Heart left ventricle (tissue), 16 donors: ENCODE measurements at regions of chr1 and their contacts with region 1.

Region 1: DNA sequence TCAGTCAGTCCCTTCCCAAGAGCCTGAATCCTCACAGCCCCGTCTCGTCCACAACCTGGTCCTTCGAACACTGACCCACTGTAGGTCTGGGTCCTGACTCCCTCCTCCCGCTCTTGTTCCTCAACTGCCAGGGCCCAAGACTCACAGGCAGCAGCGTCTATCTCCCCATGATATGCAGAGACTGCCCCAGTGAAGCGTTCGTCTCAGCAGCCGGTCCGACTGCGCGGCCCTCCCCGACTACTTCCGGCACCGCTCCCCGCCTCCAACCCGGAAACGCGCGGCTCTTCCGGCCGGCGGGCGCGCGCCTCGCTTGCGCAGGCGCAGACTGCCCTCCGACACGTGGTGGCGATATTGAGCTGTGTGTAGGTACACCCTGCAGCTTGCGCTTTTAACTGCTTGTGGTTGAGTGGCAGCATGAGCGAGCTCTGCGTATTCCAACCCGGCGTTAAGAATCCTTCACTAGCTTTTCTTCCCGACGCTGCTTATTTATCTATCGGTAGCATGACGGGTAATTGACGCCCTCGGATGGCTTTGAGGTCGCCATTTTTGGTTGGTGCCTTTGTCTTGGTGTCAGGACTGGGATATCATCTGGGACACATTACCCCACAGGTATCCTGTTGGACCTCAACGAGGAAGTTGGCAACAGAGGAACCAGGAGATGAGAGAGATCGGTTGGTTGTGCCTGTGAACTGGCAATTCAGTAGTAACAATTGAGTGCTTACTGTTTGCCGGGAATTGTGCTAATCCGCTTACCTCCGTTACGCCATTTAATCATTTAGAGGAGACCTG is at the start of gene TAF12:
- DNase-seq: peak; percentile 92 to 96 (median 94)
- ATAC-seq: peak; percentile 91 to 96 (median 95)
- H3K4me3 ChIP-seq: peak within 1 kb of the TSS; percentile 43 to 93 (median 76)
- H3K27ac ChIP-seq: peak within 1 kb of the TSS; percentile 74 to 93 (median 86)
- H3K4me1 ChIP-seq: peaks cover 6 to 44% (median 35%) of the 10 kb centered on the region in 12 donors
- H3K27me3 ChIP-seq: no peaks in the 10 kb centered on the region
- CTCF ChIP-seq: peak in 10 of 12 donors; percentile 24 to 57 (median 44)
- POLR2A ChIP-seq: peak in 1 of 2 donors; percentile 94
- total RNA-seq, gene TAF12: 18.3 to 38.5 (median 21.1) TPM

Region 2: GRCh38 chr1:28248283-28249012 is 394.6 kb before region 1 on chr1:
- intact Hi-C with region 1: loop called in 1 of 10 experiments (anchors 10 kb)
- DNase-seq: peak; percentile 73 to 86 (median 82)
- ATAC-seq: peak; percentile 37 to 53 (median 48)
- H3K4me3 ChIP-seq: peak overlapping the region in 9 of 12 donors; percentile 11 to 33 (median 20)
- H3K27ac ChIP-seq: peak overlapping the region; percentile 37 to 97 (median 86)
- H3K4me1 ChIP-seq: peaks cover 0 to 74% (median 26%) of the 10 kb centered on the region in 12 donors
- H3K27me3 ChIP-seq: no peaks in the 10 kb centered on the region
- CTCF ChIP-seq: peak; percentile 88 to 98 (median 94)
- POLR2A ChIP-seq: no peak

Region 3: GRCh38 chr1:28480308-28480707 is 162.7 kb before region 1 on chr1:
- intact Hi-C with region 1: no loop called
- DNase-seq: no peak
- ATAC-seq: no peak
- H3K4me3 ChIP-seq: no peak overlapping the region
- H3K27ac ChIP-seq: no peak overlapping the region
- H3K4me1 ChIP-seq: no peaks in the 10 kb centered on the region
- H3K27me3 ChIP-seq: no peaks in the 10 kb centered on the region
- CTCF ChIP-seq: no peak
- POLR2A ChIP-seq: no peak

Region 4: DNA sequence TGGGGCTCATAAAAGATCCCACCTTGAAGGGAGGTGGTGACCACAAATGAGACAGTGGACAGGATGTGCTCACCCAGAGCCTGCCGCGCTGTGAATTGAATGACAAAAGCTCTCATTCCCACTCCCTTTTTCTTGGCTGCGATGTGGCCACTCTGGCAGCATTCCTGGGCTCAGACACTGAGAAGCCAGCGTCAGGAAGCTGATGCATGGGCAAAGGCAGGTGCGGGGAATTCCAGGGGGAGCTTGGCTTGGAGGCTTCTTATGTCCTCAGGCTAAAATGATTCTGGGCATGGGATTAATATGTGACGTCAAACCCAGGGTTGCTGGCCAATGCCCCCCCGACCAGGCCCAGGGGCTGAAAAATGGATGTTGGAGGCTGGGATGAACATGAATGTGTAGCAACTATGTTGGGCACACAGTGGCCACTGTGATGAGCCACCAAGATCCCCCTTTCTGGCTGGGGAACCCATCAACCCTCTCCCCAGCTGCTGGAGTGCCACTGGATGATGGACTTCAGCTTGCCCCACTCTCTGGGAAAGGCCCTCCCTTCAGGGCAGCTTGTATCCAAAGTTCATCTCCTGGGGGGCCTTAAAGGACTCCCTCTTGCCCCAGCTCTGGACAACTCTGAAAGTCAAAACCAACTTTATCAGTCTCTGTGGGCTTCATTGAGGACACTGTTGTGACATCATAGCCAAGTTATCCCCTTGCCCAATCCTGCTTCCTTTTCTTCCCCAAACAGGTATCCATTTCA is 48.2 kb before region 1 on chr1:
- intact Hi-C with region 1: no loop called
- DNase-seq: no peak
- ATAC-seq: no peak
- H3K4me3 ChIP-seq: no peak overlapping the region
- H3K27ac ChIP-seq: no peak overlapping the region
- H3K4me1 ChIP-seq: peaks cover 0 to 25% (median 4%) of the 10 kb centered on the region in 12 donors
- H3K27me3 ChIP-seq: no peaks in the 10 kb centered on the region
- CTCF ChIP-seq: no peak
- POLR2A ChIP-seq: no peak

Region 5: DNA sequence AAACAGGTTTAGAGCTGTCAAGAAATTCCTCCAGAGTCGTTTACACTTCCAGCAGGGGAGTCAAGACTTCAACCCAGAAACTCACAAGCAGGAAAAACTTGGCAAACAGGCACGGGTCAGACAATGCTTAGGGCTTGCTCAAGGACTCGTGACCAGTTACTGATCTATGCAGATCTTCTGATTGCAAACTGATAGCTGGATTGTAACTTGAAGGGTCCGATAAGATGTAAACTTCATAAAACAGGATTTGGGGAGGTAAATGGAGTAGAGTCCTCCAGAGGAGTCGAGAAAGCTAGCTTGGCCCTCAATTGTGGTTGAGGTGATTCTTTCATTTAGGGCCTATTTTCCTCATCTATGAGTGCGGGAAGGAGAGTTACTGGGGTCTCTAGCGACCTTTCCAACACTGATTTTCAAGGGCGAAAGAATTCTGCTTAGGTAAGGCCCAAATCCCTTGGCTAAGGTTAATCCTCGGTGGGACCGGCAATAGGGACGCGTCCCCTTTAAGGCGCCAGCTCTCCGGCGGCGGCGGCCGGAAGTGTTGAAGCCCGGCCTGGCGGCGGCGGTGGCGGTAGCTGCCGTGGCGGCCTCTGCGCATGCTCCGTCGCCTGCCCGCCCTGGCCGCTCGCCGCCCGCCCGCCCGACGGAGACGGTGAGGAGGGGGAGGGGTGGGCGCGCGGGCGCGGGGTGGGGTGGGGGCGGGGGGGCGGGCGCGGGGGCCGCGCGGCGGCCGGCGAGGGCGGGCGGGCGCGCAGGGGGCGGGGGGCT is 25.3 kb after region 1 on chr1 and contains the start of gene GMEB1:
- intact Hi-C with region 1: loop called in 7 of 10 experiments (anchors 1 to 2 kb)
- DNase-seq: peak; percentile 88 to 94 (median 89)
- ATAC-seq: peak; percentile 79 to 93 (median 92)
- H3K4me3 ChIP-seq: peak within 1 kb of the TSS; percentile 96 to 100 (median 99)
- H3K27ac ChIP-seq: peak within 1 kb of the TSS; percentile 98 to 100 (median 99)
- H3K4me1 ChIP-seq: peaks cover 0 to 23% (median 18%) of the 10 kb centered on the region in 12 donors
- H3K27me3 ChIP-seq: no peaks in the 10 kb centered on the region
- CTCF ChIP-seq: peak in 2 of 12 donors; percentile 9 to 10
- POLR2A ChIP-seq: no peak
- total RNA-seq, gene GMEB1: 4.3 to 8.5 (median 6.1) TPM

Region 6: DNA sequence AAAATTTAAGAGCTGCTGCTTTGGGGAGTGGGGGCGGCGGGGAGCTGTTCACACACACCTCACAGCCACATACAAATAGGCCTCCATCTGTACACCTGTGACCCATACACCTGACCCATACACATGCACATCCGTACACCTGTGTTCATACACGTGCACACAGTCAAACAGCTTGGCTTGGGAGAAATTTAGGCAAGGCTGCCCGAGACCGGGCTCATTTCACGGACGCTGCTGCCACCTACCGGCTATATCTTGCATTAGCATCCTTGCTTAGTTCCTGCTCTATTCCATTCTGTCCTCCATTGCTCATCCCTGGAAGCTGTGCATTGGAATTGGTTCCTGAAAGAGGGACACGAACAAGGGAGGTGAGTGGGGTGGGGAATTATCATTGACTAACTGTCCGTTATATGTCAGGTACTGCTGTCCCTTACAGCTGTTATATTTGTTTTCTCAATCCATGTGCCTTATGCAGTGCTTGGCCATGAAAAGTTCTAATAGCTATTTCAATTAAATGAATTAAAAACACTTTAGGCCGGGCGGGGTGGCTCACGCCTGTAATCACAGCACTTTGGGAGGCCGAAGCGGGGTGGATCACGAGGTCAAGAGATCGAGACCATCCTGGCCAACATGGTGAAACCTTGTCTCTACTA is 234.2 kb after region 1 on chr1:
- intact Hi-C with region 1: loop called in 8 of 10 experiments (anchors 5 to 10 kb)
- DNase-seq: peak; percentile 60 to 82 (median 69)
- ATAC-seq: peak; percentile 49 to 86 (median 84)
- H3K4me3 ChIP-seq: no peak overlapping the region
- H3K27ac ChIP-seq: no peak overlapping the region
- H3K4me1 ChIP-seq: peaks cover 0 to 2% (median 0%) of the 10 kb centered on the region in 12 donors
- H3K27me3 ChIP-seq: peaks cover 0 to 7% (median 0%) of the 10 kb centered on the region in 9 donors
- CTCF ChIP-seq: peak; percentile 83 to 95 (median 92)
- POLR2A ChIP-seq: no peak

Region 7: GRCh38 chr1:29181413-29182225 is 538.6 kb after region 1 on chr1 and contains the start of gene SRSF4:
- intact Hi-C with region 1: loop called in 1 of 10 experiments (anchors 5 kb)
- DNase-seq: peak; percentile 99 to 100 (median 99)
- ATAC-seq: peak; percentile 92 to 97 (median 96)
- H3K4me3 ChIP-seq: peak within 1 kb of the TSS; percentile 74 to 100 (median 98)
- H3K27ac ChIP-seq: peak within 1 kb of the TSS; percentile 85 to 100 (median 100)
- H3K4me1 ChIP-seq: peaks cover 11 to 51% (median 45%) of the 10 kb centered on the region in 12 donors
- H3K27me3 ChIP-seq: no peaks in the 10 kb centered on the region
- CTCF ChIP-seq: peak; percentile 57 to 96 (median 84)
- POLR2A ChIP-seq: peak in 1 of 2 donors; percentile 87
- total RNA-seq, gene SRSF4: 40.4 to 54.6 (median 49.0) TPM